CD14-positive monocyte (primary cell): ENCODE measurements at regions of chr17 and their contacts with region 1.

Region 1: GRCh38 chr17:21126645-21127510 is at the start of gene DHRS7B:
- DNase-seq: peak; percentile 89 to 95 (median 93)
- H3K4me3 ChIP-seq: peak within 1 kb of the TSS; percentile 66 to 90 (median 89)
- H3K4me3 Mint-ChIP-seq: peak within 1 kb of the TSS; percentile 96 to 97
- H3K27ac ChIP-seq: peak within 1 kb of the TSS; percentile 97 to 99
- H3K27ac Mint-ChIP-seq: peak within 1 kb of the TSS; percentile 97 to 100 (median 99)
- H3K4me1 ChIP-seq: peaks cover 71 to 83% of the 10 kb centered on the region in 2 donors
- H3K4me1 Mint-ChIP-seq: peaks cover 73% of the 10 kb centered on the region
- H3K27me3 ChIP-seq: no peaks in the 10 kb centered on the region
- H3K27me3 Mint-ChIP-seq: peaks cover 0 to 1% (median 0%) of the 10 kb centered on the region in 3 donors
- CTCF ChIP-seq: no peak
- polyA plus RNA-seq, gene DHRS7B: 23.2 to 37.8 (median 33.9) TPM

Region 2: GRCh38 chr17:21171309-21171922 is 44.5 kb after region 1 on chr17:
- intact Hi-C with region 1: loop called in 1 of 2 experiments (anchors 10 kb)
- DNase-seq: peak in 2 of 3 donors; percentile 29 to 37
- H3K4me3 ChIP-seq: peak overlapping the region in 1 of 3 experiments; percentile 10
- H3K4me3 Mint-ChIP-seq: peak overlapping the region in 1 of 2 donors; percentile 48
- H3K27ac ChIP-seq: peak overlapping the region; percentile 49 to 73
- H3K27ac Mint-ChIP-seq: peak overlapping the region; percentile 30 to 88 (median 76)
- H3K4me1 ChIP-seq: peaks cover 23% of the 10 kb centered on the region in 2 donors
- H3K4me1 Mint-ChIP-seq: peaks cover 47% of the 10 kb centered on the region
- H3K27me3 ChIP-seq: no peaks in the 10 kb centered on the region
- H3K27me3 Mint-ChIP-seq: peaks cover 0 to 3% (median 0%) of the 10 kb centered on the region in 3 donors
- CTCF ChIP-seq: no peak

Region 3: GRCh38 chr17:21214015-21214776 is 87.3 kb after region 1 on chr17 and contains the start of gene TMEM11:
- intact Hi-C with region 1: loop called (anchors 5 kb)
- DNase-seq: peak; percentile 94 to 95 (median 95)
- H3K4me3 ChIP-seq: peak within 1 kb of the TSS; percentile 81 to 95 (median 93)
- H3K4me3 Mint-ChIP-seq: peak within 1 kb of the TSS; percentile 87 to 97
- H3K27ac ChIP-seq: peak within 1 kb of the TSS; percentile 93
- H3K27ac Mint-ChIP-seq: peak within 1 kb of the TSS; percentile 90 to 98 (median 97)
- H3K4me1 ChIP-seq: peaks cover 56 to 72% of the 10 kb centered on the region in 2 donors
- H3K4me1 Mint-ChIP-seq: peaks cover 69% of the 10 kb centered on the region
- H3K27me3 ChIP-seq: no peaks in the 10 kb centered on the region
- H3K27me3 Mint-ChIP-seq: no peaks in the 10 kb centered on the region
- CTCF ChIP-seq: peak; percentile 20
- polyA plus RNA-seq, gene TMEM11: 25.7 to 68.1 (median 59.5) TPM

Region 4: GRCh38 chr17:21252796-21253645 is 126.1 kb after region 1 on chr17 and contains the start of gene NATD1:
- intact Hi-C with region 1: loop called in 1 of 2 experiments (anchors 10 kb)
- DNase-seq: peak; percentile 73 to 83 (median 81)
- H3K4me3 ChIP-seq: peak within 1 kb of the TSS; percentile 51 to 82 (median 81)
- H3K4me3 Mint-ChIP-seq: peak within 1 kb of the TSS; percentile 82 to 90
- H3K27ac ChIP-seq: peak within 1 kb of the TSS in 1 of 2 donors; percentile 13
- H3K27ac Mint-ChIP-seq: peak within 1 kb of the TSS in 6 of 7 donors; percentile 49 to 77 (median 67)
- H3K4me1 ChIP-seq: peaks cover 21 to 37% of the 10 kb centered on the region in 2 donors
- H3K4me1 Mint-ChIP-seq: peaks cover 36% of the 10 kb centered on the region
- H3K27me3 ChIP-seq: no peaks in the 10 kb centered on the region
- H3K27me3 Mint-ChIP-seq: peaks cover 5 to 10% (median 6%) of the 10 kb centered on the region in 3 donors
- CTCF ChIP-seq: no peak
- polyA plus RNA-seq, gene NATD1: 3.0 to 13.6 (median 3.8) TPM

Region 5: GRCh38 chr17:21275579-21276263 is 148.8 kb after region 1 on chr17:
- intact Hi-C with region 1: loop called (anchors 2 to 10 kb)
- DNase-seq: peak; percentile 83 to 88 (median 85)
- H3K4me3 ChIP-seq: peak overlapping the region; percentile 33 to 81 (median 48)
- H3K4me3 Mint-ChIP-seq: peak overlapping the region; percentile 74 to 89
- H3K27ac ChIP-seq: no peak overlapping the region
- H3K27ac Mint-ChIP-seq: peak overlapping the region in 4 of 7 donors; percentile 30 to 81 (median 64)
- H3K4me1 ChIP-seq: peaks cover 41 to 52% of the 10 kb centered on the region in 2 donors
- H3K4me1 Mint-ChIP-seq: peaks cover 44% of the 10 kb centered on the region
- H3K27me3 ChIP-seq: no peaks in the 10 kb centered on the region
- H3K27me3 Mint-ChIP-seq: peaks cover 8 to 10% (median 9%) of the 10 kb centered on the region in 3 donors
- CTCF ChIP-seq: no peak

Region 6: GRCh38 chr17:21284319-21285163 is 157.7 kb after region 1 on chr17 and contains the start of gene MAP2K3:
- intact Hi-C with region 1: loop called (anchors 2 to 10 kb)
- DNase-seq: peak; percentile 99 to 100 (median 99)
- H3K4me3 ChIP-seq: peak within 1 kb of the TSS; percentile 90 to 94 (median 92)
- H3K4me3 Mint-ChIP-seq: peak within 1 kb of the TSS; percentile 99 to 100
- H3K27ac ChIP-seq: peak within 1 kb of the TSS; percentile 99 to 100
- H3K27ac Mint-ChIP-seq: peak within 1 kb of the TSS; percentile 99 to 100 (median 99)
- H3K4me1 ChIP-seq: peaks cover 68 to 69% of the 10 kb centered on the region in 2 donors
- H3K4me1 Mint-ChIP-seq: peaks cover 69% of the 10 kb centered on the region
- H3K27me3 ChIP-seq: no peaks in the 10 kb centered on the region
- H3K27me3 Mint-ChIP-seq: peaks cover 1 to 3% (median 2%) of the 10 kb centered on the region in 3 donors
- CTCF ChIP-seq: no peak
- polyA plus RNA-seq, gene MAP2K3: 107 to 166 (median 164) TPM

Region 7: GRCh38 chr17:21511363-21512198 is 384.7 kb after region 1 on chr17:
- intact Hi-C with region 1: loop called in 1 of 2 experiments (anchors 10 kb)
- DNase-seq: peak; percentile 54 to 68 (median 65)
- H3K4me3 ChIP-seq: peak overlapping the region; percentile 52 to 80 (median 71)
- H3K4me3 Mint-ChIP-seq: peak overlapping the region; percentile 76 to 91
- H3K27ac ChIP-seq: no peak overlapping the region
- H3K27ac Mint-ChIP-seq: peak overlapping the region in 1 of 7 donors; percentile 37
- H3K4me1 ChIP-seq: peaks cover 17 to 27% of the 10 kb centered on the region in 2 donors
- H3K4me1 Mint-ChIP-seq: peaks cover 28% of the 10 kb centered on the region
- H3K27me3 ChIP-seq: peaks cover 8 to 36% of the 10 kb centered on the region in 2 donors
- H3K27me3 Mint-ChIP-seq: peaks cover 26 to 41% (median 40%) of the 10 kb centered on the region in 3 donors
- CTCF ChIP-seq: peak; percentile 76